Psoas muscle (tissue), 8 donors: ENCODE measurements at regions of chr1 and their contacts with region 1.

Region 1: GRCh38 chr1:32773018-32773763 is 44.0 kb downstream of the YARS1 start:
- DNase-seq: peak; percentile 79 to 91
- ATAC-seq: peak; percentile 80 to 92 (median 88)
- H3K4me3 ChIP-seq: no peak overlapping the region
- H3K27ac ChIP-seq: no peak overlapping the region
- H3K4me1 ChIP-seq: no peaks in the 10 kb centered on the region
- H3K27me3 ChIP-seq: no peaks in the 10 kb centered on the region
- CTCF ChIP-seq: peak; percentile 94

Region 2: DNA sequence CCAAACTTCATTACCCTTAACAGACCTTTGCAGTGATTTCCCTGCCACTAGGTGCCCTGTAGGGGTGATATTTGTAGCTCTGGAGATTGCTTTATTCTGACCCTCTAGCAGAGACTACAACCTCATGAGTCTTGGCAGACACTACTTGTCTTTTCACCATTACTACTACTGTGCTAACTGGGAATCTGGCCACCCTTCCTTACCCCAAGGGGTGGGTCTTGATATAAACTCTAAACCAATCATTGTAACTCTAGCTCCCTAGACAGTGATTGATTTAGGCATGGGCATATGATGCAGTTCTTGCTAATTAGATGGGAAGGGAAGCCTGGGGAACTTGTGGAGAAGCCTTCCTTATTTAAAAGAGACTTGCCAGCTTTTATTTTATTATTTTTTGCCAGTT is 661.4 kb before region 1 on chr1:
- intact Hi-C with region 1: no loop called
- DNase-seq: no peak
- ATAC-seq: peak; percentile 9 to 36 (median 34)
- H3K4me3 ChIP-seq: no peak overlapping the region
- H3K27ac ChIP-seq: no peak overlapping the region
- H3K4me1 ChIP-seq: peaks cover 37% of the 10 kb centered on the region
- H3K27me3 ChIP-seq: no peaks in the 10 kb centered on the region
- CTCF ChIP-seq: no peak

Region 3: GRCh38 chr1:32400876-32401631 is 372.1 kb before region 1 on chr1:
- intact Hi-C with region 1: loop called in 1 of 2 experiments (anchors 10 kb)
- DNase-seq: peak; percentile 86 to 93
- ATAC-seq: peak; percentile 91 to 99 (median 96)
- H3K4me3 ChIP-seq: peak overlapping the region; percentile 36
- H3K27ac ChIP-seq: no peak overlapping the region
- H3K4me1 ChIP-seq: no peaks in the 10 kb centered on the region
- H3K27me3 ChIP-seq: no peaks in the 10 kb centered on the region
- CTCF ChIP-seq: peak; percentile 87

Region 4: DNA sequence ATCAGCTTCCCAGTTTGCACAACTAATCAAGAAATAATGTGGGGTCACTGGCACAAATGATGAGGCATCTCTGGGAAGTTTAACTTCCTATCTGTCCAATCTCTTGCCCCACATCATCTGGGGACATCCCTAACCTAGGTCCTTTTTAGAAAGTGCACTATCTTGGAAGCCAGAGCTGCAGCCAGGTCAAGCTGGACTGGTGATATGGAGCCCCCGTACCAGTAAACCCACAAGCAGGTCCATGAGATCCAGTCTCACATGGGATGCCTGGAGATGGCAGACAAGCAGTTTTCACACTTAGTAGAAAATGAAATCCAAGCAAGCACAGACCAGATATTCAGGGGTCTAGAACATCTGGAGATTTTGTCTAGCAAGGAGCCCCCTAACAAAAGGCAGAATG is 351.4 kb before region 1 on chr1:
- intact Hi-C with region 1: no loop called
- DNase-seq: no peak
- ATAC-seq: no peak
- H3K4me3 ChIP-seq: no peak overlapping the region
- H3K27ac ChIP-seq: no peak overlapping the region
- H3K4me1 ChIP-seq: peaks cover 5% of the 10 kb centered on the region
- H3K27me3 ChIP-seq: no peaks in the 10 kb centered on the region
- CTCF ChIP-seq: no peak

Region 5: DNA sequence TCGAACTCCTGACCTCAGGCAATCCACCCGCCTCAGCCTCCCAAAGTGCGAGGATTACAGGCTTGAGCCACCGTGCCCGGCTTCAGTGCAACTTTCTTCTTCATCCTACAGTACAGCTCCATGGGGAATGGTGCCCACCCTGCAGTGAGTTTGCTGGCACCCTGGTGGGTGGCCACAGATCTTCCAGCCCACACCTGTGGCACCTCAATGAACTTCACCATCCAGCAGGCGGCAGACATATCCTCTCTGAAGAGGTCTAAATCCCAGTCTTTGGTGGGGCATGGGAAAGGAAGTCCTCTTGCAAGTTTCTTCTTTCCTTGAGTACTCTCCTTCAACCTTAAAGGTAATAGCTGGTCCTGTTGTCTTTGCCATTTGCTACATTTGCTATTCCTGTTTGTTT is 252.0 kb before region 1 on chr1:
- intact Hi-C with region 1: loop called in 1 of 2 experiments (anchors 5 kb)
- DNase-seq: no peak
- ATAC-seq: peak in 2 of 4 donors; percentile 13 to 40
- H3K4me3 ChIP-seq: peak overlapping the region; percentile 54
- H3K27ac ChIP-seq: no peak overlapping the region
- H3K4me1 ChIP-seq: no peaks in the 10 kb centered on the region
- H3K27me3 ChIP-seq: no peaks in the 10 kb centered on the region
- CTCF ChIP-seq: no peak

Region 6: GRCh38 chr1:32702599-32703478 is 70.4 kb before region 1 on chr1 and contains the start of gene SYNC:
- intact Hi-C with region 1: no loop called
- DNase-seq: peak; percentile 83 to 94
- ATAC-seq: peak; percentile 82 to 86 (median 84)
- H3K4me3 ChIP-seq: peak within 1 kb of the TSS; percentile 83
- H3K27ac ChIP-seq: peak within 1 kb of the TSS; percentile 99
- H3K4me1 ChIP-seq: peaks cover 30% of the 10 kb centered on the region
- H3K27me3 ChIP-seq: no peaks in the 10 kb centered on the region
- CTCF ChIP-seq: no peak
- total RNA-seq, gene SYNC: 40.4 to 82.5 (median 54.4) TPM

Region 7: GRCh38 chr1:32716312-32717148 is 56.7 kb before region 1 on chr1:
- intact Hi-C with region 1: loop called (anchors 1 to 2 kb)
- DNase-seq: peak; percentile 42 to 68
- ATAC-seq: peak; percentile 48 to 71 (median 56)
- H3K4me3 ChIP-seq: no peak overlapping the region
- H3K27ac ChIP-seq: no peak overlapping the region
- H3K4me1 ChIP-seq: no peaks in the 10 kb centered on the region
- H3K27me3 ChIP-seq: no peaks in the 10 kb centered on the region
- CTCF ChIP-seq: no peak

Region 8: DNA sequence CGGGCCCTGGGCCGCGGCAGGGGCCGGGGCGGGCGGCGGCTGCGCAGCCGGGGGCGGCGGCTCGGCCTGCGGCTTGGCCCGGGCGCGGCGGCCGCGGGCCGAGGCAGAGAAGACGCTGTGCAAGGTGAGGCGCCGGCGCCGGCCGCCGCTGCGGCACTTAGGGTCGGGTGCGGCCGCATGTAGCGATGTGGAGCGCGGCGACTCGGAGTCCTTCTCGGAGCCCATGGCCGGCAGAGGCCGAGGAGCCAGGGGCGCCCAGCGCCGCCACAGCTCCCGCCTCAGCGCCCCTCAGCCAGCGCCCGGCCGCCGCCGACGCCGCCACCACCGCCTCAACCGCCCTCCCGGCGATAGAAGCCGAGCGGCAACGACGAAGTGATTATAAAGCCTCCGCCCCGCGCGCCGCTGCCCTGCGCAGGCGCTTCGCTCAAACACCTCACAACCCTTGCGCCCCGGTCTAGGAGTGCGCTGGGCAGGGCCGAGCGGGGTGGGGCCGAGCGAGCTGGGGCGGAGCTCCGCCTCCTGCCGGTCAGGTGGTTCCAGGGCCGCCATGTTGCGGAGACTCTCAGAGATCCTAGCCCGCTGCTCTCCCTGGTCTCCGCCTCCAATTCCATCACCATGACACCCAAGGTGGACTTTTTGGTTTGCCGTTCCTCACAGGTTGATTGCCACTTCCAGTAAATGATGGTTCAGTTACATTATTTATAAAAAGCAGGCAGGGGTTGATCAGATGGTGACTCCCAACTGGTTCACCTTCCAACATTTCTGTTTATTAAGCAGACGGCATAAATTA is 191.5 kb after region 1 on chr1 and contains the start of gene RNF19B:
- intact Hi-C with region 1: no loop called
- DNase-seq: peak; percentile 95 to 97
- ATAC-seq: peak; percentile 99
- H3K4me3 ChIP-seq: peak within 1 kb of the TSS; percentile 98
- H3K27ac ChIP-seq: peak within 1 kb of the TSS; percentile 93
- H3K4me1 ChIP-seq: peaks cover 30% of the 10 kb centered on the region
- H3K27me3 ChIP-seq: peaks cover 0 to 6% (median 0%) of the 10 kb centered on the region in 3 donors
- CTCF ChIP-seq: no peak
- total RNA-seq, gene RNF19B: 13.1 to 23.4 (median 18.9) TPM